Heart left ventricle (tissue), 16 donors: ENCODE measurements at regions of chr13 and their contacts with region 1.

Region 1: DNA sequence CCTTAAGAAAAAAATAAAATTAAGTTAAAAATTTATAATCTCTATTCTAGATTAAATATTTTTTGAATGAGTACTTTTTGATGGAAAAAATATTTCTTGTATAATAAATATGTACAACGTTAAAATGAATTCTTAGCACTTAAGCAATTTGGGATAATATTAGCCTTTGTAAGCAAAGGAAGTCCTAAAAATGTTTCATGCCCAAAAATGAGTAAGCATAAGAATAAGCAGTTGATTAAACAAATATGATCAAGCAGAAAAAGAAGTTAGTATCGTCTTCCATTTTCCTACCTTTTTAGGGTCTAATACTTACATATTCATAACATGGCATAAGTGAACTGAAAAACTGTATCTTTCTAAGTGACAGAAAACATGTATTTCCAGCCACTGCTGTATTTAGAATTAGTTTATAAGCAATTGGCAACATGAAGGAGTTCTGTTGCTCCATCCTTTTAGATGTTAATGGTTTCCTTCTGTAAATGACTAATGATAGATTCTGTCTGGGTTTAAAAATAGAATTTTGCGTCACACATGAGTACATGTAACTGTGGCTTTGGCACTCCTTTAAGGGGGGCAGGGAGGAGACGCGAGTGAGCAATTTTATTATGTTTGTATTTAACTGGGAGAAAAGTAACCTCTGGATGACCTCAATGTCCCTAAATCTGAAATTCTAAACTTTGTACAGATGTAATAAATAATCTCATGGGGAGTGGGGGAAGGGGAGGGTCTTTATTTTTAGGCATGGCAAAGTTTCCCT is 237.4 kb downstream of the RGCC start:
- DNase-seq: peak in 4 of 5 donors; percentile 70 to 77 (median 72)
- ATAC-seq: peak; percentile 90 to 97 (median 96)
- H3K4me3 ChIP-seq: peak overlapping the region in 5 of 12 donors; percentile 6 to 18 (median 13)
- H3K27ac ChIP-seq: peak overlapping the region; percentile 6 to 81 (median 74)
- H3K4me1 ChIP-seq: peaks cover 0 to 31% (median 18%) of the 10 kb centered on the region in 12 donors
- H3K27me3 ChIP-seq: no peaks in the 10 kb centered on the region
- CTCF ChIP-seq: no peak
- POLR2A ChIP-seq: no peak

Region 2: DNA sequence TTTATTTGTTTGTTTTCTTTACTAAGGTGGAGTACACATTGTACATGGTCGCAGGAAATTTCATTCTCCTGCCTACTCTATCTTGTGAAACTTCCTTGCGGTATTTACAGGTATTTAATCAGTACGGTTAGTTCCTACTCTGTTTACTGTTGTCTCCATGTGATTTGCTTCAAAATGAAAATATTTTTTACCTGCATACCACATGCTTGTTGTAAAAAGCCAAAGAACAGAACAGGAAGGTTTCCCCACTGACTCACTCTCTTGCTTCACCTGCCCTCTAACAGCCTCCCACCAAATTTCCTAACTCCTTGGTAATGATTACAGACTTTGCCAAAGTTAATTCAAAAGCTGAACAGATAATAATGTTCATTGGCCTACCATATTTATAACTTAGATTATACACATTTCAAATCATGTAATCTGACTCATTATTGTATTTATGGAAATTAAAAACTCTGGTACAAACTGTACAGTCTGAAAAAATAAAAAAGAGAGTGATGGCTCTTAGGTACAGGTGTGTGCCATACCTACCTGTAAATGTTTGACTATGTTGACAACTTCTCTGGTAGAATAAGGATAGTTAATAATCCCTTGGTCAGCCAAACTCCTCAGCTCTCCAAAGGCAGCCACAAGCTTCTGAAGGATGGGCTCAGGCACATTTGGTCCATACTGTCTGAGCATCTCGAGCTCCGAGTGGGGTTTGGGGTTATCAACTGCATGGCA is 26.3 kb after region 1 on chr13:
- intact Hi-C with region 1: loop called in 1 of 10 experiments (anchors 5 kb)
- DNase-seq: no peak
- ATAC-seq: no peak
- H3K4me3 ChIP-seq: no peak overlapping the region
- H3K27ac ChIP-seq: no peak overlapping the region
- H3K4me1 ChIP-seq: peaks cover 0 to 7% (median 0%) of the 10 kb centered on the region in 12 donors
- H3K27me3 ChIP-seq: no peaks in the 10 kb centered on the region
- CTCF ChIP-seq: no peak
- POLR2A ChIP-seq: no peak